H1 (cell line): ENCODE measurements at regions of chr19 and their contacts with region 1.

Region 1: DNA sequence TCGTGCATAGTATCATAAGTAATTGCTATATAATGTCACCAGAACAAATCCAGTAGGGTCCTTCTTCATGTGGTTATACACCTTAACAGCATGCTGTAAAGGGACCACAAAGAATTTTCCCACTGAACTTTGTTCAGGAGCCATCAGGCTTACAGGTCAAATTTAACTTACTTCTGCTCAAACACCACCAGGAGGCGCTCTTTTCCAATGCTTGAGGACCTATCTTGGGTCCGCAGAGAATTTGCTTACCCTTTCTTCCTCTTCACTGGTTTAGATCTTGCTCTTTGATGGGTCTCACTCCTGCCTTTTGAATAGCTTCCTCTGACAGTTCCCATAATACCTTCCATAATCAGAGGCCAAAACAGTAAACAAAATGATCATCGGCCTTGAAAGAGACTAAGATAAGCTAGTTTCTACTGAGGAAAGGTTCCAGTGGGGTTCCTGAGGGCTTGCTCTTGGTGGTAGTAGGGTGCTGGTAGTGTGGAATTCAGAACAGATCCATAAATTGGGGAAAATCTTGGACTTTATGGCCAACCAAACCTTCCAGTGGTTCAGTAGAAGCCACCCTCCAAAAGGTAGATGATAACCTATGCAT is 37.4 kb downstream of the SCGB2B2 start:
- DNase-seq: peak in 1 of 2 experiments; percentile 58
- H3K4me3 ChIP-seq: no peak overlapping the region
- H3K27ac ChIP-seq: no peak overlapping the region
- H3K4me1 ChIP-seq: no peaks in the 10 kb centered on the region
- H3K27me3 ChIP-seq: no peaks in the 10 kb centered on the region
- CTCF ChIP-seq: peak in 2 of 3 experiments; percentile 71 to 85; a peak in 3 of 4 replicates
- EP300 ChIP-seq: no peak
- POLR2A ChIP-seq: no peak
- RAD21 ChIP-seq: peak; percentile 86

Region 2: GRCh38 chr19:34588249-34588648 is 51.3 kb before region 1 on chr19:
- CTCF ChIA-PET with region 1: no interaction called
- POLR2A ChIA-PET with region 1: no interaction called
- DNase-seq: no peak
- H3K4me3 ChIP-seq: no peak overlapping the region
- H3K27ac ChIP-seq: no peak overlapping the region
- H3K4me1 ChIP-seq: no peaks in the 10 kb centered on the region
- H3K27me3 ChIP-seq: 0 out of 7 replicates have a peak, but pooled peaks cover 0 to 2% (median 0%) of the 10 kb centered on the region in 4 experiments
- CTCF ChIP-seq: no peak
- EP300 ChIP-seq: no peak
- POLR2A ChIP-seq: no peak
- RAD21 ChIP-seq: no peak

Region 3: GRCh38 chr19:34662919-34663318 is 23.3 kb after region 1 on chr19:
- CTCF ChIA-PET with region 1: interaction called, 31 read pairs
- POLR2A ChIA-PET with region 1: no interaction called
- DNase-seq: peak in 1 of 2 experiments; percentile 19
- H3K4me3 ChIP-seq: no peak overlapping the region
- H3K27ac ChIP-seq: no peak overlapping the region
- H3K4me1 ChIP-seq: no peaks in the 10 kb centered on the region
- H3K27me3 ChIP-seq: no peaks in the 10 kb centered on the region
- CTCF ChIP-seq: peak; percentile 59 to 75 (median 63)
- EP300 ChIP-seq: no peak
- POLR2A ChIP-seq: no peak
- RAD21 ChIP-seq: peak; percentile 42 to 45

Region 4: GRCh38 chr19:34677386-34678084 is 37.9 kb after region 1 on chr19 and contains the start of gene ZNF302:
- CTCF ChIA-PET with region 1: interaction called, 11 read pairs
- POLR2A ChIA-PET with region 1: interaction called, 4 read pairs
- DNase-seq: peak; percentile 92
- H3K4me3 ChIP-seq: peak within 1 kb of the TSS; percentile 71 to 90 (median 75)
- H3K27ac ChIP-seq: peak within 1 kb of the TSS; percentile 91
- H3K4me1 ChIP-seq: peaks cover 0 to 3% (median 2%) of the 10 kb centered on the region in 4 experiments; a peak in 4 of 7 replicates
- H3K27me3 ChIP-seq: peaks cover 0 to 2% (median 0%) of the 10 kb centered on the region in 4 experiments; a peak in 3 of 7 replicates
- CTCF ChIP-seq: no peak
- EP300 ChIP-seq: no peak
- POLR2A ChIP-seq: peak; percentile 82 to 96
- RAD21 ChIP-seq: no peak
- total RNA-seq, gene ZNF302: 17.0 and 20.4 TPM in 2 replicates

Region 5: DNA sequence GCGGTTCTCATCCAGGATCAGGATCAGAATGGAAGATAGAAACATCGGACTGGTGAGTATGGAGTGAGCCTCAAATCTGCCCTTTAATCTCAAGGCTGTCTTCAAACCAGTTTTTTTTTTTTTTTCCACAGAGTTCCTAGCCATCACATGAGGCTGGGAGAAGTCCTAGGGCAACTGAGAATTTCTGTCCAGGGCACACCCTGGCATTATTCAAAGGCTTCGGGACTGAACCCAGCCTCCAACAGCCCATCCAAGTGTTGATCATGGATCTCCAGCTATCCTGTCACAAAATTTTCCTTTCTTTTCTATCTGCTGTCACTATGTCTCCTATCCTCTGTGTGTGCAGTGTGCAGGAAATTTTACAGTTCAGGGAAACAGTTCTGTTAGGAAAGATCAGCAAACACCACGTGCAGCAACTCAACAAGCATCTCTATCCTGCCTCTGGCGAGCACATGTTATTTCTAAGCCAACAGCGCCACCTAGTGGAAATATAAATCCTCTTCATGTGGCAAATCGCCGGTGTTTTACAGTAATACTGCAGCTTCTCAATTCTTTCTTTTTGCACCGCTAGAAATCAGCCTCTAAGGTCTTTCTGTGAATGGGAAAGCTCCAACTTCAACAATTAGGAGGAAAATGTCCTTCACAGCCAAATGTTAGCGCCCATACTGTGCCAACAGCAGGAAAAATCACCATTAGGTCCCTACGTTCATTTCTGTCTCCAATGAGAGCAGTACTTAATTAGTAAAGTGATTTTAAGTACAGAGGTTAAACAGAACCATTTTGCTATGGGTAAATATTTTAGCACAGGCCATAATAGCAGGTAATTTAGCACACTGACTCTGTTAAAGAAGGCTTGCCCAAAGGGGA is 73.0 kb after region 1 on chr19:
- CTCF ChIA-PET with region 1: interaction called, 46 read pairs
- POLR2A ChIA-PET with region 1: interaction called, 3 read pairs
- DNase-seq: peak; percentile 23 to 51
- H3K4me3 ChIP-seq: no peak overlapping the region
- H3K27ac ChIP-seq: no peak overlapping the region
- H3K4me1 ChIP-seq: no peaks in the 10 kb centered on the region
- H3K27me3 ChIP-seq: no peaks in the 10 kb centered on the region
- CTCF ChIP-seq: peak in 2 of 3 experiments; percentile 61 to 76; a peak in 3 of 4 replicates
- EP300 ChIP-seq: no peak
- POLR2A ChIP-seq: no peak
- RAD21 ChIP-seq: peak; percentile 89 to 90

Region 6: DNA sequence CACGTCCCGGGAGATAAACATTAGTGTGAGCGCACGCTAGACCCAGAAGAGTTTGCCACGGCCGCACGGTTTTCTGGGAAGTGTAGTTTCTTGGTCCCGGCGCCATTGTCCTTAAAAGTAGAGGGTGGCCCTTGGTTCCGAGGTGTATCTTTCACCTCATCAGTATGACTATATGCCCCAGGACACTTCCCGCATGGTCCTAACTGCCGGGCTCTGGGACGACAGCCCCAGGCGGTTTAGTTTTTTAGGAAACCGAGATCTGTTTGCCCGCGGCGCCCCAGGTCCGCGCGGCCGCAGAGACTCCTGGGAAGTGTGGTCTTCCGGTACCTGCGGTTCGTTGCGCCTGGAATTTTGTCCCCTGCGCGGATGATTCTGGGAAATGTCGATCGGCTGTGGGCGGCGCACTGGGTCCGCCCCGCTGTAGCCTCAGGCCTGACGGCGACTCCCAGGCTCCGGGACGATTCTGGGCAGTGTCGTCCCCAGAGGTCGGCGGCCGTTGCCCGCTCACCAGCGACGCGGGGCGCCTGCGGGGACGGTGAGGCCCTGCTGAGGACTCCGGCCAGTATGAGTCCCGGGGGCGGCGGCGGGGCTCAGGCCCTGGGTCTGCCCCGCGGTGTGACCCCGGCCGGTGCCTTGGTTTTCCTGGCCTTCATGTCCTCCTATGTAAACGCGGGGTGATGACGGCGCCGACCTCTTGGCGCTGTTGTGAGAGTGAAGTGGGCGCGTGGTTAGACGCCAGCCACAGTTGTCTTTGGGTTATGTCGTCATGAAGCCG is 94.4 kb after region 1 on chr19 and contains the start of gene ZNF181:
- CTCF ChIA-PET with region 1: no interaction called
- POLR2A ChIA-PET with region 1: no interaction called
- DNase-seq: peak; percentile 67 to 90
- H3K4me3 ChIP-seq: peak within 1 kb of the TSS; percentile 87 to 98 (median 93)
- H3K27ac ChIP-seq: peak within 1 kb of the TSS; percentile 81
- H3K4me1 ChIP-seq: peaks cover 0 to 11% (median 2%) of the 10 kb centered on the region in 4 experiments; a peak in 4 of 7 replicates
- H3K27me3 ChIP-seq: no peaks in the 10 kb centered on the region
- CTCF ChIP-seq: no peak
- EP300 ChIP-seq: no peak
- POLR2A ChIP-seq: peak; percentile 74 to 92
- RAD21 ChIP-seq: no peak
- total RNA-seq, gene ZNF181: 7.5 and 8.0 TPM in 2 replicates